Caco-2 (cell line): ENCODE measurements at regions of chr1 and their contacts with region 1.

Region 1: GRCh38 chr1:205523891-205524793 is 19.7 kb downstream of the CDK18 start:
- DNase-seq: peak; percentile 76 to 81
- H3K4me3 ChIP-seq: no peak overlapping the region
- H3K4me3 Mint-ChIP-seq: no peak overlapping the region
- H3K27ac Mint-ChIP-seq: no peak overlapping the region
- H3K4me1 ChIP-seq: no peaks in the 10 kb centered on the region
- H3K4me1 Mint-ChIP-seq: no peaks in the 10 kb centered on the region
- H3K27me3 ChIP-seq: no peaks in the 10 kb centered on the region
- H3K27me3 Mint-ChIP-seq: peaks cover 4% of the 10 kb centered on the region
- CTCF ChIP-seq: peak; percentile 80 to 92

Region 2: DNA sequence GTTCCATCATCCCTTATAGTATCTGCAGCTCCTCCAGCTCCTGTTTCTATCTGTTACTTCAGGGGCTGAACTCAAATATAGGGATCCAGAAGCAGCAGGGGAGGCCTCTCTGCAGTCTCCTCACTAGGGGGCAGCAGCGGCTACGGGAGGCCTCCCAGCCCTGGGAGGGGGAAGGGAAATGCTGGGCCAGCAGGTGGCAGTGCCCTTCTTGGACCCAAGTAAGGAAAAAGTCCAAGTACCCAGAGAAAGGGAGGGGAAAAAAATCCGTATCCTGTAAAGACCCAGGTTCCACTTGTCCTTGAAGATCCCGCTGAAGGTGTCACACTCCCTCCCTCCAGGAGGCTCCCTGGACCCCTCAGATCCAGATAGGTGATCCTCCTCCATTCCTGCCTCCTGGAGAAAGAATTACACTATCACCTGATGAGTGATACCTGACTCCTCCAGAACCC is 188.5 kb before region 1 on chr1:
- CTCF ChIA-PET with region 1: interaction called, 19 read pairs
- POLR2A ChIA-PET with region 1: no interaction called
- intact Hi-C with region 1: no loop called
- DNase-seq: peak; percentile 79 to 87
- H3K4me3 ChIP-seq: no peak overlapping the region
- H3K4me3 Mint-ChIP-seq: no peak overlapping the region
- H3K27ac Mint-ChIP-seq: no peak overlapping the region
- H3K4me1 ChIP-seq: no peaks in the 10 kb centered on the region
- H3K4me1 Mint-ChIP-seq: no peaks in the 10 kb centered on the region
- H3K27me3 ChIP-seq: no peaks in the 10 kb centered on the region
- H3K27me3 Mint-ChIP-seq: no peaks in the 10 kb centered on the region
- CTCF ChIP-seq: peak; percentile 90 to 99

Region 3: GRCh38 chr1:205354259-205354904 is 169.8 kb before region 1 on chr1:
- CTCF ChIA-PET with region 1: interaction called, 23 read pairs
- POLR2A ChIA-PET with region 1: no interaction called
- intact Hi-C with region 1: loop called (anchors 1 kb)
- DNase-seq: peak; percentile 57 to 63
- H3K4me3 ChIP-seq: no peak overlapping the region
- H3K4me3 Mint-ChIP-seq: no peak overlapping the region
- H3K27ac Mint-ChIP-seq: no peak overlapping the region
- H3K4me1 ChIP-seq: peaks cover 4% of the 10 kb centered on the region; the same call in 1 of the 2 replicates
- H3K4me1 Mint-ChIP-seq: peaks cover 6% of the 10 kb centered on the region
- H3K27me3 ChIP-seq: no peaks in the 10 kb centered on the region
- H3K27me3 Mint-ChIP-seq: peaks cover 11% of the 10 kb centered on the region
- CTCF ChIP-seq: peak; percentile 80 to 85

Region 4: GRCh38 chr1:205396967-205397616 is 127.0 kb before region 1 on chr1:
- CTCF ChIA-PET with region 1: interaction called, 11 read pairs
- POLR2A ChIA-PET with region 1: no interaction called
- intact Hi-C with region 1: loop called (anchors 1 kb)
- DNase-seq: peak; percentile 44 to 51
- H3K4me3 ChIP-seq: no peak overlapping the region
- H3K4me3 Mint-ChIP-seq: no peak overlapping the region
- H3K27ac Mint-ChIP-seq: no peak overlapping the region
- H3K4me1 ChIP-seq: no peaks in the 10 kb centered on the region
- H3K4me1 Mint-ChIP-seq: no peaks in the 10 kb centered on the region
- H3K27me3 ChIP-seq: no peaks in the 10 kb centered on the region
- H3K27me3 Mint-ChIP-seq: peaks cover 21% of the 10 kb centered on the region
- CTCF ChIP-seq: peak; percentile 70 to 83

Region 5: GRCh38 chr1:205563867-205564441 is 39.8 kb after region 1 on chr1:
- CTCF ChIA-PET with region 1: no interaction called
- POLR2A ChIA-PET with region 1: no interaction called
- intact Hi-C with region 1: no loop called
- DNase-seq: peak in 1 of 2 experiments; percentile 38
- H3K4me3 ChIP-seq: no peak overlapping the region
- H3K4me3 Mint-ChIP-seq: no peak overlapping the region
- H3K27ac Mint-ChIP-seq: no peak overlapping the region
- H3K4me1 ChIP-seq: peaks cover 8% of the 10 kb centered on the region
- H3K4me1 Mint-ChIP-seq: peaks cover 17% of the 10 kb centered on the region
- H3K27me3 ChIP-seq: peaks cover 11% of the 10 kb centered on the region
- H3K27me3 Mint-ChIP-seq: peaks cover 17% of the 10 kb centered on the region
- CTCF ChIP-seq: no peak

Region 6: DNA sequence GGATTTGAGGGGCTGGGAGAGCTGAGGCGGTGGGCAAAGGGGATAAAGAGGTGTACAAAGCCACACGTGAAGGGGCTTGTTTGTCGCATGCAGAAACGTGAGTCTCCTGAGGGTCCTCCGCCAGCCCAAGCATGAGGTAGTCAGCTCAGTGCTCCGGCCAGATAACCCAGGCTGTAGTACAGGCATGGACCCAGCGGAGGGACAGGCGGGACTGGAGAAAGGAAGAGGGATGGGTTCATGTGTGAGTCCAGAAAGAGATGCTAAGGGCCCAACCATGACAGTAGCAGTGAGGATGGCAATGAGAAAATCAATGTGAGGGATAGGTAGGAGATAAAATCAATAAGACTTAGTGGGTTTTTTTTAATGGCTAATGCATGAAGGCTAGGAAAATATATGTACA is 121.4 kb after region 1 on chr1:
- CTCF ChIA-PET with region 1: no interaction called
- POLR2A ChIA-PET with region 1: no interaction called
- intact Hi-C with region 1: no loop called
- DNase-seq: no peak
- H3K4me3 ChIP-seq: no peak overlapping the region
- H3K4me3 Mint-ChIP-seq: no peak overlapping the region
- H3K27ac Mint-ChIP-seq: no peak overlapping the region
- H3K4me1 ChIP-seq: no peaks in the 10 kb centered on the region
- H3K4me1 Mint-ChIP-seq: no peaks in the 10 kb centered on the region
- H3K27me3 ChIP-seq: no peaks in the 10 kb centered on the region
- H3K27me3 Mint-ChIP-seq: no peaks in the 10 kb centered on the region
- CTCF ChIP-seq: no peak